ENCODE measurements at regions of chr15 and their contacts with region 1.

Region 1: GRCh38 chr15:65400760-65401610 is 21.8 kb downstream of the IGDCC4 start:
- DNase-seq: peak; percentile 94
- H3K4me3 ChIP-seq: no peak overlapping the region
- H3K27ac ChIP-seq: no peak overlapping the region
- H3K4me1 ChIP-seq: peaks cover 6% of the 10 kb centered on the region
- H3K27me3 ChIP-seq: no peaks in the 10 kb centered on the region
- CTCF ChIP-seq: peak; percentile 80

Region 2: DNA sequence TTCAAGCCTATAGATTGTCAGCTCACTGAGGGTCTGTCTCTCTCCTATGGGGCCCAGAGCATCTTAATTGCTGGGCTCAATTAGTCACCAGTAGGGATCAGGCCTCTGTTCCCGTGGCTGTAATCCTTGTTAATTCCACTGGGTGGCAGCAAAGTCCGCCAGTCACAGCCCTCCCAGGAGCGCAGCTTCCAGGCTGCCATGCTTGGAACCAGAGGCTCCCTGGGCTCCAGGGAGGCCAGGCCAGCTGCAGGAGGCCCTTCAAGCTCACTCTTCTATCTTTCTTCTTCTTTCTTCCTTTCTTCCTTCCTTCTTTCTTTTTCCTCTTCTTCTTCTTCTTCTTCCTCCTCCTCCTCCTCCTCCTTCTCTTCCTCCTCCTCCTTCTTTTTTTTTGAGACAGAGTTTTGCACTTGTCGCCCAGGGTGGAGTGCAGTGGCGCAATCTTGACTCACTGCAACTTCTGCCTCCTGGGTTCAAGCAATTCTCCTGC is 82.1 kb before region 1 on chr15:
- CTCF ChIA-PET with region 1: interaction called, 3 read pairs
- POLR2A ChIA-PET with region 1: no interaction called
- intact Hi-C with region 1: loop called (anchors 5 kb)
- DNase-seq: peak; percentile 89
- H3K4me3 ChIP-seq: no peak overlapping the region
- H3K27ac ChIP-seq: no peak overlapping the region
- H3K4me1 ChIP-seq: no peaks in the 10 kb centered on the region
- H3K27me3 ChIP-seq: no peaks in the 10 kb centered on the region
- CTCF ChIP-seq: peak; percentile 87

Region 3: DNA sequence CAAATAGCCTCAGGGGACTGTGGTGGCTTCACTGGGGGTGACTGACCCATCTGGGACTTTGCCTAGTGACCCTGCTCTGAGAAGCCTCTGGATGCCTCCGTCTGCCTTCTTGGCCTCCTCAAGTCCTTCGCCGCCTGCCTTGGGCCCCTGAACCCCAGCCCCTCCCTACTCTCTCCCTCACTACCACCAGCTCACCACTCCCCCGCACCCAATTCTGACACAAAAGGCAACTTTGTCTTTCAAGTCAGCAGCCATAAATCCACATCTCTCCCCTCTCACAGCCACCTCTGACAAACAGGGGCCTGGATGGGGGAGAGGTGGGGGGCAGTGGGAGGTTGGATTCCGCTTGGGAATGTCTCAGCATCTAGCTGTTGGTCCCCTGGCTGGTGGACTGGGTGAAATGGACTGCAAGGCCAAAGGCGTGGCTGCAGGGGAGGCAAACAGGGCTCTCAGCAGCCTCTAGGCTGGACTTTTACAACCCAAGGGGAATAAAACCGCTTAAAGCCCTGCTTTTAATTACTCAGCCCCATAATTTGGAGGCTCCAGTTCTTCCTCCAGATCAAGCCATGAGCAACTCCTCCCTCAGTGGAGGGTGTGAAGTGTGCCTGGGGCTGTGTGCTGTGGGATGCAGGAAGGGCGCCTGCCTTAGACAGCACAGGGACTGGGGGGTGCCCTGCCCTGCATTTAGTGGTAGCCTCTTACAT is 56.6 kb before region 1 on chr15:
- CTCF ChIA-PET with region 1: interaction called, 12 read pairs
- POLR2A ChIA-PET with region 1: no interaction called
- intact Hi-C with region 1: no loop called
- DNase-seq: no peak
- H3K4me3 ChIP-seq: no peak overlapping the region
- H3K27ac ChIP-seq: no peak overlapping the region
- H3K4me1 ChIP-seq: no peaks in the 10 kb centered on the region
- H3K27me3 ChIP-seq: no peaks in the 10 kb centered on the region
- CTCF ChIP-seq: no peak

Region 4: DNA sequence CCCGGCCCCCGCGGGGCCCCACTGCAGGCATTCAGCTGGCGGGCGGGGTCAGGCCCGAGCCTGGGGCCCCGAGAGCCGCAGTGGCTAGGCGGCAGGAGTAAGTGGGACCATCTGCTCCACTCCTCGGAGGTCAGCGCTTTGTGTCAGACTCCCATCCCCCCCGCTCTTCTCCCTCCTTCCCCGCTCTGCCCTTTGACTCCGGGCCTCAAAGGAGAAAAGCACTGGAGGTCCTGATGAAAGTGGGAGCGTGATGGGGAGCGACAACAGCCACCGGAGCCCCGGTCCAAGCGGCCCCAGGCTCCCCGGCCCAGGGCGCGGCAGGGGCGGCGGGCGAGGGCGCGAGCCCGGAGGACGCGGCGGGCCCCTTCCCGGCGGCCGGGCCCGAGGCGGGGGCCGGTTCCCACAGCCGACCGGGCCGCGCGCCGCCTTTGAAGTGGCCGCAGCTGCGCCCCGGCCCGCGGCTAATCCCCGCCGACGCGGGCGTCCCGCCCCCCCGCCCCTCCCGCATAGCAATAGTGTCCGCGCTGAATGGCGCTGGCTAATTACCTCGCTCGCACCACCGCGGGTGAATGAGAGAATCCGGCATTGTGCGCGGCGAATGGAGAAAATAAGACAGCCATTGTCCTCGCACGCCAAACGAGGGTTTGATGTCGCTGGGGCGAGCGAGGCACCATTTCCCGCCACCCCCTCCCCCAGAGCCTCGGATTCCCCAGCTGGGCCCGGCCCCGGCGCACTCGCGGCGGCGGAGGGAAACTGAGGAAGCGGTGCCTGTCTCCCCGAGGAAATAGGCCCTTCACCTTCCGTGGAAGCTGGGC is 45.6 kb before region 1 on chr15:
- CTCF ChIA-PET with region 1: interaction called, 10 read pairs
- POLR2A ChIA-PET with region 1: no interaction called
- intact Hi-C with region 1: no loop called
- DNase-seq: no peak
- H3K4me3 ChIP-seq: peak overlapping the region; percentile 29
- H3K27ac ChIP-seq: no peak overlapping the region
- H3K4me1 ChIP-seq: no peaks in the 10 kb centered on the region
- H3K27me3 ChIP-seq: peaks cover 13% of the 10 kb centered on the region
- CTCF ChIP-seq: no peak

Region 5: GRCh38 chr15:65414841-65415621 is 14.0 kb after region 1 on chr15:
- CTCF ChIA-PET with region 1: interaction called, 14 read pairs
- POLR2A ChIA-PET with region 1: no interaction called
- intact Hi-C with region 1: no loop called
- DNase-seq: peak; percentile 94
- H3K4me3 ChIP-seq: no peak overlapping the region
- H3K27ac ChIP-seq: peak overlapping the region; percentile 56
- H3K4me1 ChIP-seq: peaks cover 36% of the 10 kb centered on the region
- H3K27me3 ChIP-seq: no peaks in the 10 kb centered on the region
- CTCF ChIP-seq: 0 out of 2 replicates have a peak, but pooled peaks have one; percentile 21

Region 6: GRCh38 chr15:65579762-65580161 is 178.8 kb after region 1 on chr15:
- CTCF ChIA-PET with region 1: no interaction called
- POLR2A ChIA-PET with region 1: no interaction called
- intact Hi-C with region 1: no loop called
- DNase-seq: no peak
- H3K4me3 ChIP-seq: no peak overlapping the region
- H3K27ac ChIP-seq: no peak overlapping the region
- H3K4me1 ChIP-seq: peaks cover 16% of the 10 kb centered on the region
- H3K27me3 ChIP-seq: no peaks in the 10 kb centered on the region
- CTCF ChIP-seq: no peak

Region 7: GRCh38 chr15:65646486-65646885 is 245.5 kb after region 1 on chr15:
- CTCF ChIA-PET with region 1: interaction called, 13 read pairs
- POLR2A ChIA-PET with region 1: no interaction called
- intact Hi-C with region 1: no loop called
- DNase-seq: no peak
- H3K4me3 ChIP-seq: no peak overlapping the region
- H3K27ac ChIP-seq: no peak overlapping the region
- H3K4me1 ChIP-seq: no peaks in the 10 kb centered on the region
- H3K27me3 ChIP-seq: no peaks in the 10 kb centered on the region
- CTCF ChIP-seq: no peak